Activated CD4-positive, alpha-beta memory T cell treated with anti-CD3 and anti-CD28 coated beads for 36 hours (primary cell): ENCODE measurements at regions of chr1 and their contacts with region 1.

Region 1: GRCh38 chr1:205782627-205783412 is 7.5 kb upstream of the RAB29 start:
- DNase-seq: no peak
- H3K4me3 Mint-ChIP-seq: no peak overlapping the region
- H3K27ac Mint-ChIP-seq: no peak overlapping the region
- H3K4me1 Mint-ChIP-seq: peaks cover 9% of the 10 kb centered on the region
- H3K27me3 Mint-ChIP-seq: no peaks in the 10 kb centered on the region

Region 2: GRCh38 chr1:205711104-205712020 is 71.5 kb before region 1 on chr1:
- CTCF ChIA-PET with region 1: interaction called, 5 read pairs
- POLR2A ChIA-PET with region 1: no interaction called
- intact Hi-C with region 1: loop called (anchors 1 kb)
- DNase-seq: peak; percentile 57
- H3K4me3 Mint-ChIP-seq: no peak overlapping the region
- H3K27ac Mint-ChIP-seq: peak overlapping the region; percentile 50
- H3K4me1 Mint-ChIP-seq: peaks cover 9% of the 10 kb centered on the region
- H3K27me3 Mint-ChIP-seq: no peaks in the 10 kb centered on the region

Region 3: DNA sequence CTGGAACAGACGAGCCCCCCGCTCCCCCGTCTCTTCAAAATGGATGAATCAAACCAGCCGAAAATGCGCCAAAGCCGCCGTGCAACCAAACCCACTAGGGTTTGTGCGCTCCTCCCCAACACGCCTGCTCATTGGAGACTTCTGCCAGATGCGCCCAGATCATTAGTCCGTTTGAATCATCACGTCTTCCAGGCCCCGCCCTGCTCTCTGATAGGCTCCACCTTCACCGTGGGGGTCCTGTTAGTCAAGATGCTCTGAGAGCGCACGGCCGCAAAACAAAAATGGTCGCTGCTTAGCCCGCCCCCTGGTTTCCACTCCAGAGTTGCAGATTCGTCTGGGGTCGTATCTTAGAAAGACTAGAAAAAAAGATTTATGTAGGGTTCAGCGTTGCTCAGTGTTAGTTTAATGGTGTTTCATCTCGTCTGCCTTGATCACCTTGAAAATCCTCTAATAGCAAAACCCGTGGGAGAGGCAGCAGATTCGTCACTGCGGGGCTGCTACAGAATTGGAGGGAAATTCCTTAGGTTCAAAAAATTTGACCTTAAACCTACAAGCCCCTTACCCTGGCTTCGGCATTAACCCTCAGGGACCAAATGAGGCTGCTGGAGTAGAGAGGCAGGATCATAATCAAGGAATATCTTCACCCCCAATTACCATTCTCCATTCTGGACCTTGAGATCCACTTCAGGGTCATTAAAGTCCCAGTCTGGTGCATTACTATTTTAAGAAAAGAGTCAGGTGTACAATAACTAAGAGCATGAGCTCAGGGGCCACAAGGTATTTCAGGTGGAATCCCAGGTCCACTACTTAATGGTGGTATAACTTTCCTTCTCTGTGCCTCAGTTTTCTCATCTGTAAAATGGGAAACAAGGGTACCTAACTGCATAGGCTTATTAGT is 32.4 kb before region 1 on chr1 and contains the start of gene NUCKS1:
- CTCF ChIA-PET with region 1: no interaction called
- POLR2A ChIA-PET with region 1: no interaction called
- intact Hi-C with region 1: no loop called
- DNase-seq: peak; percentile 98
- H3K4me3 Mint-ChIP-seq: peak within 1 kb of the TSS; percentile 93
- H3K27ac Mint-ChIP-seq: peak within 1 kb of the TSS; percentile 99
- H3K4me1 Mint-ChIP-seq: peaks cover 30% of the 10 kb centered on the region
- H3K27me3 Mint-ChIP-seq: peaks cover 1% of the 10 kb centered on the region
- total RNA-seq, gene NUCKS1: 149 to 202 TPM

Region 4: GRCh38 chr1:205878026-205878425 is 95.2 kb after region 1 on chr1:
- CTCF ChIA-PET with region 1: no interaction called
- POLR2A ChIA-PET with region 1: no interaction called
- intact Hi-C with region 1: no loop called
- DNase-seq: no peak
- H3K4me3 Mint-ChIP-seq: no peak overlapping the region
- H3K27ac Mint-ChIP-seq: no peak overlapping the region
- H3K4me1 Mint-ChIP-seq: no peaks in the 10 kb centered on the region
- H3K27me3 Mint-ChIP-seq: peaks cover 6% of the 10 kb centered on the region